ENCODE measurements at regions of chr1 and their contacts with region 1.

Region 1: DNA sequence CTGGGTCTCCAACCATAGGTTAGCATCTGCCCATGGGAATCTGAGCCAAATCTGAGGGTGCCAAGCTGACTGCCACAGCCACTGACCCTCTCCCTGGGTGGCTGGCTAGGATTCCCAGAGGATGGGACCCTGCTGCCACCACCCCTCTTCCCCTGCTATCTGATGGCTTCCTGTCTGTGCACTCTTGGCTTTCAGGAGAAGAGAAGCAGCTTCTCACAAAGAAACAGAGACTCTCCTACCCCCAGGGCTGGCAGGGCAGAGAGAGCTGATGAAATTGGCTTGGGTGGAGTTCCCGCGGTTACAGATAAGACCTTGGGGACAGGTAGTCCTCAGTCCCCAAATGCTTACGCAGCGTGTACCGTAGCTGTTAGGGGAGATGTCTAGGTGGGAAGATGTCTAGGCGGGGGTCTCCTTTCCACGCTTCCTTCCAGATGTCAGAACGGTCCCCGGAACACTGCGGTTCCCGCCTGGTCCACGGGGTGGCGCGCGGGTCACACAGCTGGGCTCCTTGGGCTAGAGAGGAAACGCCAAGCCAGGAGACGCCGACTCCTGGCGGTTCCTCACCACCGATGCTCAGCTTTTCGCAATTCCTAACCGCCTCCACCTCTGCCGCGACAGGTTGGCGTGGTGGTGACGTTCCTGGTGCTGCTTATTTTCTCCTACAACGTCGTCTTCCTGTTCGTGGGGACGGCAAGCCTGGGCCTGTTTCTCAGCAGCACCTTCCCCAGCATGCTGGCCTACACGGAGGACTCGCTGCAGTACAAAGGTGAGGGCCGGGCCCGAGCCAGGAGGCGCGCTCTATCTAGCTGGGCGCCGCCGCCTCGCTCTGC is 40.1 kb downstream of the ELK4 start:
- DNase-seq: peak; percentile 82 to 88 (median 87)
- H3K4me3 ChIP-seq: peak overlapping the region; percentile 0 to 78 (median 65)
- H3K27ac ChIP-seq: peak overlapping the region in 1 of 2 experiments; percentile 50
- H3K4me1 ChIP-seq: peaks cover 3 to 31% (median 19%) of the 10 kb centered on the region in 4 experiments
- H3K27me3 ChIP-seq: no peaks in the 10 kb centered on the region

Region 2: GRCh38 chr1:205528887-205529825 is 62.6 kb before region 1 on chr1:
- CTCF ChIA-PET with region 1: interaction called, 17 read pairs
- POLR2A ChIA-PET with region 1: no interaction called
- DNase-seq: peak; percentile 71 to 76 (median 74)
- H3K4me3 ChIP-seq: peak overlapping the region in 4 of 7 experiments; percentile 32 to 70 (median 44)
- H3K27ac ChIP-seq: no peak overlapping the region
- H3K4me1 ChIP-seq: peaks cover 0 to 5% (median 1%) of the 10 kb centered on the region in 4 experiments
- H3K27me3 ChIP-seq: no peaks in the 10 kb centered on the region

Region 3: DNA sequence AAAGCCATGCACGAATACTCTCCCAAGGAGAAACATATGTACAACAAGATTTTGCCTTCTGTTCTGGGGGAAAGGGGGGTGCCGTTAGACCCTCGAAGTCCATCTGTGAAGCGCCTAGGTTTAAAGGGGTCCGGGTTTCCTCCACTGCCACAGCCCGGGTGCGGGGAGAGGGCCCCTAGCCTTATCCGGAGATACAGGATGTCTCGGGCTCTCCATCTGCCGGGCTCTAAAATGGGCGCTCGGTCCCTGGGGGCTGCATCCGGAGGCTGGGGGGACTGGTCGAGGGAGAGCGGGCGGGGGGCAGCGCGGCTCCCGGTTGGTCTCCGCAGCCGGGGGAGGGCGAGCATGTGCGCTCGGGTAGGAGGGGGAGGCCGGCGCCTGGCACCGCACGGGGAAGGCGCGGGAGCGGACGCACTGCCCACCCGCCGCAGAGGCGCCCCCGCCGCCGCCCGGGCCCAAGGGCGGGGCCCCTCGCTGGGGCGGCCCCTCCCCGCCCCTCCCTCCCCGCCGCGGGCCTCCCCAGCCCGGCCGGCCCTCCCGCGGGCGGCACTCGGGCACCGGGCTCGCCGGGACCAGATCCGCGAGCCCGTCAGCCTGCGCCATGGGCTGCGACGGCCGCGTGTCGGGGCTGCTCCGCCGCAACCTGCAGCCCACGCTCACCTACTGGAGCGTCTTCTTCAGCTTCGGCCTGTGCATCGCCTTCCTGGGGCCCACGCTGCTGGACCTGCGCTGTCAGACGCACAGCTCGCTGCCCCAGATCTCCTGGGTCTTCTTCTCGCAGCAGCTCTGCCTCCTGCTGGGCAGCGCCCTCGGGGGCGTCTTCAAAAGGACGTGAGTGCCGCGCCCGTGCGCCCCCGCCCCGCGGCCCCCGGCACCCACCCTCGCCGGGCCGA is 23.0 kb before region 1 on chr1:
- CTCF ChIA-PET with region 1: interaction called, 19 read pairs
- POLR2A ChIA-PET with region 1: interaction called, 3 read pairs
- DNase-seq: peak in 2 of 3 donors; percentile 37 to 51
- H3K4me3 ChIP-seq: peak overlapping the region in 4 of 7 experiments; percentile 19 to 58 (median 29)
- H3K27ac ChIP-seq: no peak overlapping the region
- H3K4me1 ChIP-seq: peaks cover 0 to 9% (median 4%) of the 10 kb centered on the region in 4 experiments
- H3K27me3 ChIP-seq: peaks cover 2 to 64% (median 46%) of the 10 kb centered on the region in 5 experiments

Region 4: GRCh38 chr1:205578780-205579606 is 12.7 kb before region 1 on chr1:
- CTCF ChIA-PET with region 1: interaction called, 21 read pairs
- POLR2A ChIA-PET with region 1: no interaction called
- DNase-seq: no peak
- H3K4me3 ChIP-seq: no peak overlapping the region
- H3K27ac ChIP-seq: no peak overlapping the region
- H3K4me1 ChIP-seq: peaks cover 0 to 19% (median 17%) of the 10 kb centered on the region in 4 experiments
- H3K27me3 ChIP-seq: peaks cover 0 to 8% (median 0%) of the 10 kb centered on the region in 5 experiments

Region 5: DNA sequence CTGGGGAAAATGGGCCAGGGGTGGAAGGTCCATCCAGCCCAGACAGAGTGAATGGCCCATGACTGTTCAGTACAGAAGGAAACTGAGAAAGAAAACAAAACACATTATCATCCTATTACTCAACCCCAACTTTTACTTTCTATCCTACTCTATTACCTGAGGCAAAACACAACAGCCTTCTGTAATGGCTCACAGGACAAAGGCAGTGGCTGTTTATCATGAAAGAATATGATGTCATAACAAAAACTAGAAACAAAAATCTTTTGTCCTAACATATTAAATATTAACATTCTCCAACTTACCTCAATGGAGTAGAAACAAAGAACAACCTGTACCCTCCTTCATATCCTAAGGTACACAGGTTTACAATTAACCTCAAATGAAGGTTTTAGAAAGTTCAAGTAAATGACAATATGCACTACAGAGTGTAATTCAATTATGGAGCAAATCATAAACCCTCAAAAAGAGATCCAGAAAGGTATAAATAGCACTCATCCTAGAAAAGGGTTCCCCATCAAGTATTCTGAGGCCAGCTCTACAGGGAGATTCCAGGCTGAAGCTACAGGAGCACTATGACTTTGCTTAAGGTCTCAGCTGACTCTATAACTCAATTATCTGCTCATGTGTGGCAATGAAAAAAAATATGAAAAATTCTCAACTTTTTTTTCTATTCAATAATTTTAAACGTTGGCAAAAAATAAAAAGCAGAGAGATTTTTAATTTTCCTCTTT is 25.0 kb after region 1 on chr1:
- CTCF ChIA-PET with region 1: interaction called, 12 read pairs
- POLR2A ChIA-PET with region 1: no interaction called
- DNase-seq: no peak
- H3K4me3 ChIP-seq: no peak overlapping the region
- H3K27ac ChIP-seq: no peak overlapping the region
- H3K4me1 ChIP-seq: no peaks in the 10 kb centered on the region
- H3K27me3 ChIP-seq: no peaks in the 10 kb centered on the region

Region 6: GRCh38 chr1:205631727-205632373 is 40.1 kb after region 1 on chr1 and contains the start of gene ELK4:
- CTCF ChIA-PET with region 1: interaction called, 195 read pairs
- POLR2A ChIA-PET with region 1: interaction called, 19 read pairs
- DNase-seq: peak; percentile 99 to 100 (median 99)
- H3K4me3 ChIP-seq: peak within 1 kb of the TSS; percentile 67 to 95 (median 90)
- H3K27ac ChIP-seq: peak within 1 kb of the TSS; percentile 80 to 92
- H3K4me1 ChIP-seq: peaks cover 8 to 26% (median 21%) of the 10 kb centered on the region in 4 experiments
- H3K27me3 ChIP-seq: no peaks in the 10 kb centered on the region

Region 7: GRCh38 chr1:205711104-205712020 is 119.6 kb after region 1 on chr1:
- CTCF ChIA-PET with region 1: interaction called, 70 read pairs
- POLR2A ChIA-PET with region 1: no interaction called
- DNase-seq: peak; percentile 87 to 92 (median 88)
- H3K4me3 ChIP-seq: no peak overlapping the region
- H3K27ac ChIP-seq: no peak overlapping the region
- H3K4me1 ChIP-seq: peaks cover 26 to 50% (median 34%) of the 10 kb centered on the region in 4 experiments
- H3K27me3 ChIP-seq: no peaks in the 10 kb centered on the region

Region 8: GRCh38 chr1:205919026-205919746 is 327.4 kb after region 1 on chr1:
- CTCF ChIA-PET with region 1: no interaction called
- POLR2A ChIA-PET with region 1: no interaction called
- DNase-seq: peak; percentile 68 to 82 (median 74)
- H3K4me3 ChIP-seq: no peak overlapping the region
- H3K27ac ChIP-seq: no peak overlapping the region
- H3K4me1 ChIP-seq: peaks cover 0 to 12% (median 6%) of the 10 kb centered on the region in 4 experiments
- H3K27me3 ChIP-seq: no peaks in the 10 kb centered on the region